Heart right ventricle (tissue), 16 donors: ENCODE measurements at regions of chr1 and their contacts with region 1.

Region 1: GRCh38 chr1:27979151-27979858 is 19.5 kb downstream of the XKR8 start:
- DNase-seq: no peak
- ATAC-seq: peak in 6 of 8 donors; percentile 71 to 78 (median 74)
- H3K4me3 ChIP-seq: no peak overlapping the region
- H3K27ac ChIP-seq: peak overlapping the region in 3 of 10 donors; percentile 9 to 61 (median 38)
- H3K4me1 ChIP-seq: peaks cover 0 to 20% (median 13%) of the 10 kb centered on the region in 9 donors
- H3K27me3 ChIP-seq: no peaks in the 10 kb centered on the region
- CTCF ChIP-seq: peak; percentile 14 to 65 (median 57)

Region 2: DNA sequence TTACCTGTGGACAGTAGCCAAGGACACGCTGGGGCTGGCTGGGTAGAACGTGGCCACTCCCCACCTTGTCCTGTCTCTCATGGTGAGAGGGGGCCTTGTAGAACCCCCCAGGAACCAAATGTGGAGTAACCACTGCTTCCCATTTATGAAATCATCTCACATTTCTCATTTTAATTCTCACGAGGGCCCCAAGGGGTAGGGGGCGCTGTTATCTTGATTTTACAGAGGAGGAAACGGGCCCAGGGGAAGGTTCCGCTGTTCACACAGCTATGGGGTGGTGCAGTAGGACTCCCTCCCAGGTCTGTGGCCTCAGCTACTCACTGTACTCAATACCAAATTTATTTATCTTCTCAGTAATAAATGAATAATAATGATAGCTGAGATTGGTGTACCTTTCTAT is 39.0 kb before region 1 on chr1:
- intact Hi-C with region 1: loop called in 2 of 10 experiments (anchors 2 kb)
- DNase-seq: peak; percentile 30 to 57
- ATAC-seq: peak in 5 of 8 donors; percentile 35 to 51 (median 47)
- H3K4me3 ChIP-seq: no peak overlapping the region
- H3K27ac ChIP-seq: peak overlapping the region in 1 of 10 donors; percentile 90
- H3K4me1 ChIP-seq: peaks cover 0 to 20% (median 7%) of the 10 kb centered on the region in 9 donors
- H3K27me3 ChIP-seq: peaks cover 0 to 12% (median 5%) of the 10 kb centered on the region in 7 donors
- CTCF ChIP-seq: peak in 7 of 9 donors; percentile 32 to 49 (median 44)

Region 3: GRCh38 chr1:28021064-28021463 is 41.8 kb after region 1 on chr1:
- intact Hi-C with region 1: no loop called
- DNase-seq: no peak
- ATAC-seq: no peak
- H3K4me3 ChIP-seq: no peak overlapping the region
- H3K27ac ChIP-seq: no peak overlapping the region
- H3K4me1 ChIP-seq: no peaks in the 10 kb centered on the region
- H3K27me3 ChIP-seq: no peaks in the 10 kb centered on the region
- CTCF ChIP-seq: no peak